Heart left ventricle (tissue), 16 donors: ENCODE measurements at regions of chr6 and their contacts with region 1.

Region 1: DNA sequence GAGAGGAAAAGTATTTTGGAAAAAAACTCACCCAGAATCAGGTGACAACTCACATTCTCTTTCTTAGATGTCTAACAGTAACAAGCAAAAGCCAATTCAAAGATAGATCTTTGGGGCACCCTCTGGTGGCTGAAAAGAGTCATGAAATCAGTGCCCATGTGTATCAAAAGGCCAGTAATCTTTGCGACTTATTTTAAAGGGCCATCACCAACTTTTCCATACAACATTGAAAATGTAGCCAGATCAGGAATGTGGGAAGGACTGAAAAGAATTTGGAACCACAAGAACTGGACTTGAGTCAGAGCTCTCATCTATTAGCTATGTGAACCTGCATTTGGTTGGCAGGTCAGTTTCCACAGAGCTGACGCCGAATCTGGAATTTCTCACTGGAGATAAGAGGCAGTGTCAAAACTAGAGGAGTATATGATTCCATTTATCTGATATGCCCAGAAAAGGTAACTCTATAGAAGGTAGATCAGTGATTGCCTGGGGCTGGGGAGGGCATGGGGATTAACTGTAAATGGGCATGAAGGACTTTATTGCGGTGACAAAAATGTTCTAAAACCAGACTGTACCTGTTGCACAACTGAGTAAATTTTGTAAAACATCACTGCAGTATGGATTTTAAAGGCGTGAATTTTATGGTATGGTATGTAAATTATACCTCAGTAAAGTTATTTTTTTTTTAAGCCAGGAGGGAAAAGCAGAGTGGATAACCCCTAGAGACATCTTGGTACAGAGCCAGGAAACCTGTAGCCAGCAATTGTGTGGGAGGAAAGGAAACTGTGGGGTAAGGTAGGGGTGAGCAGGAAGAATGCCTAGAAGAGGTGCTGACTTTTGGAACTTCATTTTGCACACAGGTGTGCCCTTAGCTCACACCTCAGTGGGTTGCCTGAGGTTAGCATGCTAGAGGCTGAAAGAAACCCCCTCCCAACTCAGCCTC is 117.1 kb upstream of the ASF1A start:
- DNase-seq: peak in 4 of 5 donors; percentile 33 to 61 (median 56)
- ATAC-seq: peak; percentile 51 to 81 (median 76)
- H3K4me3 ChIP-seq: peak overlapping the region in 6 of 12 donors; percentile 9 to 32 (median 30)
- H3K27ac ChIP-seq: no peak overlapping the region
- H3K4me1 ChIP-seq: peaks cover 0 to 26% (median 5%) of the 10 kb centered on the region in 12 donors
- H3K27me3 ChIP-seq: no peaks in the 10 kb centered on the region
- CTCF ChIP-seq: peak; percentile 66 to 85 (median 75)
- POLR2A ChIP-seq: no peak

Region 2: GRCh38 chr6:118565311-118565960 is 211.4 kb before region 1 on chr6:
- intact Hi-C with region 1: loop called in 2 of 10 experiments (anchors 5 to 10 kb)
- DNase-seq: no peak
- ATAC-seq: peak in 3 of 4 donors; percentile 34 to 42 (median 37)
- H3K4me3 ChIP-seq: no peak overlapping the region
- H3K27ac ChIP-seq: no peak overlapping the region
- H3K4me1 ChIP-seq: peaks cover 0 to 20% (median 1%) of the 10 kb centered on the region in 12 donors
- H3K27me3 ChIP-seq: no peaks in the 10 kb centered on the region
- CTCF ChIP-seq: peak in 10 of 12 donors; percentile 21 to 55 (median 34)
- POLR2A ChIP-seq: no peak

Region 3: DNA sequence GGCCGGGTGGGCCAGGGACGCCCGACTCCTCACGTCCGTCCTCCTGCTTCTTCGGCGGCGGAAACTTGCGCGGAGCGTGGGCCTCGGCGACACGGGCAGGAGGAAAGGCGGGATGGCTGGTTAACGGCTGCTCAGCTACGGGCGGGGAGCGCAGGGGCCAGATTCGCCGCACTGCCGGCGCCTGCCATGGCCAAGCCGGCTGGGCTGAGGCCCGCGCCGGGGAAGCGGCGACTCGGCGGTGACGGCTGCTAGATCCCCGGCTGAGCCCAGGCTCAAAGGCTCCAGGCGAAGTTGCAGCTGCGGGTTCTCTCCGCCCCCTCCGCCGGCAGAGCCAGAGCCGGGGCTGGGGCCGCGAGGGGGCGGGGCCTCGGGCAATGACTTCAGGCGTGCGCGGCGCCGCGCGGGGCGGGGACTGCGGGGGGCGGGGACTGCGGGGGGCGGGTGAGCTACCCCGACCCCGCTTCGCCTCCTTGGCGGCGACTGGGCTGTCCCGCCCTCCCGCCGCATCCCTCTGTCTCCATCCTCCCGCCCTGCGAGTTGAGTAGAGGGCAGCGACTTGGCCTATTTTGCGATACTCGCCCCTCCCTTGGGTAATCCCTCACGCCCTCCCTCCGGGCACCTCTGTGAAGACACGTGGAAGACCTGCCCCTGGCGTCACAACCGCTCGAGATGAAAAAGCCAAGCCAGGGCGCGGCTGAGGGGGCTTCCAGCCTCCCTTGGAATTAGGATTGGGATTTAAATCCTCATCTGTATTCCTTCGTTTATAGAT is 125.4 kb before region 1 on chr6 and contains the start of gene CEP85L:
- intact Hi-C with region 1: loop called in 7 of 10 experiments (anchors 2 to 10 kb)
- DNase-seq: peak; percentile 93 to 96 (median 94)
- ATAC-seq: peak; percentile 95 to 99 (median 98)
- H3K4me3 ChIP-seq: peak within 1 kb of the TSS; percentile 69 to 98 (median 93)
- H3K27ac ChIP-seq: peak within 1 kb of the TSS; percentile 86 to 99 (median 96)
- H3K4me1 ChIP-seq: peaks cover 5 to 30% (median 13%) of the 10 kb centered on the region in 12 donors
- H3K27me3 ChIP-seq: no peaks in the 10 kb centered on the region
- CTCF ChIP-seq: peak in 1 of 12 donors; percentile 5
- POLR2A ChIP-seq: peak; percentile 38 to 91
- total RNA-seq, gene CEP85L: 5.1 to 14.4 (median 7.6) TPM

Region 4: DNA sequence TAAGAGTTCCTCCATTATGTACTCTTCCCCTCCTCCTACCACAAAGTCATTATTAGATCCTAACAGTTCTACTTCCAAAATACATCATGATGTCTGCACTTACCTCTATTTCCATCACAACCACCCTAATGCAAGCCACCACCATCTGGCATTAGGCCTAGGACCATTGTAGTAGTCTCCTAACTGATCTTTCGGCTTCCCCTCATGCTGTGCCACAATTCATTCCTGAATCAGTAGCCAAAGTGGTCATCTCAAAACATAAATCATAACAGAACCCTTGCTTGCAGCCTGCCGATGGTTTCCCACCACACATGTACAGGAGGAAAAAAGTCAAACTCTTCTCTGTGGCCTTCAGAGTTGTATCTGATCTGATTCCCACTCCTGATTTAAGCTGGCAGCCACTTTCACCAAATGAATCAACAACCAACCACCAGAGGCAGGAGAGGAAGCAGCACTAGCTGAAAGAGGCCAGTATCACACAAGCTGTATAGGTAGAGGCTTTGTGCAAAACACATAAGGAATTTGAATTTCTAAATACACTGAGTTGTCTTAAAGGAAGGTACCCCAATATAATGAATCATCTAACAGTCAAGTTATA is 275.5 kb after region 1 on chr6:
- intact Hi-C with region 1: no loop called
- DNase-seq: no peak
- ATAC-seq: no peak
- H3K4me3 ChIP-seq: no peak overlapping the region
- H3K27ac ChIP-seq: no peak overlapping the region
- H3K4me1 ChIP-seq: no peaks in the 10 kb centered on the region
- H3K27me3 ChIP-seq: no peaks in the 10 kb centered on the region
- CTCF ChIP-seq: no peak
- POLR2A ChIP-seq: no peak

Region 5: GRCh38 chr6:119361209-119361608 is 584.3 kb after region 1 on chr6:
- intact Hi-C with region 1: no loop called
- DNase-seq: no peak
- ATAC-seq: peak in 3 of 4 donors; percentile 80 to 96 (median 95)
- H3K4me3 ChIP-seq: peak overlapping the region in 1 of 12 donors; percentile 21
- H3K27ac ChIP-seq: no peak overlapping the region
- H3K4me1 ChIP-seq: peaks cover 0 to 16% (median 0%) of the 10 kb centered on the region in 12 donors
- H3K27me3 ChIP-seq: no peaks in the 10 kb centered on the region
- CTCF ChIP-seq: no peak
- POLR2A ChIP-seq: no peak

Region 6: DNA sequence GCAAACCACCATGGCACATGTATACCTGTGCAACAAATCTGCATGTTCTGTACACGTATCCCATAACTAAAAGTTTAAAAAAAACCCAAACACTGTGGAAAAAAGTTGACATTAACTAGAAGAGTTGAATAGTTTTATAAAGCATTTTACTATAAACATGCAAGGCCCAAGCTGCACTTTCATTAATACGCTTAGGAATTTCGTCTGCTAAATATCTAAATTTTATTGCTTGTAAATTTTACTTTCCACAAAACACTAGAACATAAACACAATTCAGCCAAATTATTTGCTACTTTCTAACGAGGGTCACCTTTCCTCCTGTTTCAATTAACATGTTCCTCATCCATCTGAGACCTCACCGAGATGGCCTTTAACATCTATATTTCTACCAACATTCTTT is 647.1 kb after region 1 on chr6:
- intact Hi-C with region 1: no loop called
- DNase-seq: no peak
- ATAC-seq: no peak
- H3K4me3 ChIP-seq: no peak overlapping the region
- H3K27ac ChIP-seq: no peak overlapping the region
- H3K4me1 ChIP-seq: no peaks in the 10 kb centered on the region
- H3K27me3 ChIP-seq: no peaks in the 10 kb centered on the region
- CTCF ChIP-seq: no peak
- POLR2A ChIP-seq: no peak